ENCODE measurements at regions of chr14 and their contacts with region 1.

Region 1: DNA sequence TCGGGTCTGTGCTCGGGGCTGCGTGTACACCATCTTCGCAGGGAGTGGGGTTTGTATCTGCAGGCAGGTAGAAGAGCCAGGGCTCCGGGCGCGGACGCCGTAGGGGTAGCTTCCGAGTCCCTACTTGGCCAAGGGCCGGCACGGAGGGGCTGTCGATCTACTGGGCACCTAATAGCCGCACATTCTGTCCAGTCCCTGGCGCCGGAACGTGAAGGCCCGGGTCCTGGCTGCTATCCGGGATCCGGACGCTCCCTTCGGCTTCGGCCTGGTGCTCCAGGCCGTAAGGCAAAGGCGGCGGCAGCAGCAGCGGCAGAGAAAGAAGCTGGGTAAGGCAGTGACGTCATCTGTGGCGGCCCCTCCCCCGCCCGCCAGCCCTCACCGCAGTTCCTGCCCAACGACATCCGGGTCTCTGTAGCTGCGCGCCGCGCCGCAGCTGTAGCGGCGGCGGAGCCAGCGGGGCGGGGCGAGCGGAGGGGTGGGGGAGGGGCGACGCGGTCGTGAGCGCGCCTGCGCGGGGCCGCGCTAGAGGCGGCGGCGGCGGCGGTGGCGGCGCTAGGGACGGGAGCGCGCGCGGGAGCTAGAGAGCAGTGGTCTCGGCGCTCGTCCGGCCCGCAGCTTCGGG is at the start of gene PPM1A:
- DNase-seq: peak; percentile 83 to 93 (median 89)
- ATAC-seq: peak; percentile 73
- H3K4me3 ChIP-seq: peak within 1 kb of the TSS; percentile 66
- H3K27ac ChIP-seq: peak within 1 kb of the TSS; percentile 99
- H3K4me1 ChIP-seq: peaks cover 10 to 25% of the 10 kb centered on the region in 2 experiments; a peak in 4 of 5 replicates
- H3K27me3 ChIP-seq: no peaks in the 10 kb centered on the region
- CTCF ChIP-seq: no peak
- EP300 ChIP-seq: no peak
- POLR2A ChIP-seq: peak; percentile 88
- RAD21 ChIP-seq: no peak
- polyA plus RNA-seq, gene PPM1A: 10.1 to 13.6 TPM

Region 2: GRCh38 chr14:60091550-60092530 is 157.0 kb before region 1 on chr14 and contains the start of gene PCNX4:
- CTCF ChIA-PET with region 1: no interaction called
- POLR2A ChIA-PET with region 1: no interaction called
- in situ Hi-C with region 1: no loop called
- intact Hi-C with region 1: loop called (anchors 5 kb)
- DNase-seq: peak; percentile 81 to 96 (median 84)
- ATAC-seq: peak; percentile 91
- H3K4me3 ChIP-seq: peak within 1 kb of the TSS; percentile 76
- H3K27ac ChIP-seq: peak within 1 kb of the TSS; percentile 99
- H3K4me1 ChIP-seq: peaks cover 0 to 22% of the 10 kb centered on the region in 2 experiments; a peak in 3 of 5 replicates
- H3K27me3 ChIP-seq: no peaks in the 10 kb centered on the region
- CTCF ChIP-seq: 0 out of 6 replicates have a peak, but pooled peaks of 1 of the 3 experiments have one; percentile 3
- EP300 ChIP-seq: no peak; the same call in 1 of the 2 replicates
- POLR2A ChIP-seq: peak; percentile 88
- RAD21 ChIP-seq: no peak
- polyA plus RNA-seq, gene PCNX4: 10.0 to 12.0 TPM

Region 3: GRCh38 chr14:60514741-60515491 is 266.1 kb after region 1 on chr14:
- CTCF ChIA-PET with region 1: no interaction called
- POLR2A ChIA-PET with region 1: no interaction called
- in situ Hi-C with region 1: no loop called
- intact Hi-C with region 1: no loop called
- DNase-seq: peak; percentile 5 to 13 (median 10)
- ATAC-seq: peak; percentile 78
- H3K4me3 ChIP-seq: peak overlapping the region; percentile 30
- H3K27ac ChIP-seq: no peak overlapping the region
- H3K4me1 ChIP-seq: peaks cover 0 to 13% of the 10 kb centered on the region in 2 experiments; a peak in 1 of 5 replicates
- H3K27me3 ChIP-seq: peaks cover 8 to 24% of the 10 kb centered on the region in 2 experiments; a peak in 3 of 5 replicates
- CTCF ChIP-seq: peak in 2 of 3 experiments; percentile 2 to 49; a peak in 2 of 6 replicates
- EP300 ChIP-seq: no peak
- POLR2A ChIP-seq: no peak
- RAD21 ChIP-seq: no peak

Measured in K562 (cell line).